Mammary epithelial cell (primary cell): ENCODE measurements at regions of chr18 and their contacts with region 1.

Region 1: GRCh38 chr18:48436907-48437306 is 27.7 kb upstream of the ZBTB7C start:
- DNase-seq: peak; percentile 76
- H3K4me3 ChIP-seq: no peak overlapping the region
- H3K27ac ChIP-seq: no peak overlapping the region
- H3K4me1 ChIP-seq: peaks cover 19% of the 10 kb centered on the region
- H3K27me3 ChIP-seq: no peaks in the 10 kb centered on the region
- CTCF ChIP-seq: no peak

Region 2: DNA sequence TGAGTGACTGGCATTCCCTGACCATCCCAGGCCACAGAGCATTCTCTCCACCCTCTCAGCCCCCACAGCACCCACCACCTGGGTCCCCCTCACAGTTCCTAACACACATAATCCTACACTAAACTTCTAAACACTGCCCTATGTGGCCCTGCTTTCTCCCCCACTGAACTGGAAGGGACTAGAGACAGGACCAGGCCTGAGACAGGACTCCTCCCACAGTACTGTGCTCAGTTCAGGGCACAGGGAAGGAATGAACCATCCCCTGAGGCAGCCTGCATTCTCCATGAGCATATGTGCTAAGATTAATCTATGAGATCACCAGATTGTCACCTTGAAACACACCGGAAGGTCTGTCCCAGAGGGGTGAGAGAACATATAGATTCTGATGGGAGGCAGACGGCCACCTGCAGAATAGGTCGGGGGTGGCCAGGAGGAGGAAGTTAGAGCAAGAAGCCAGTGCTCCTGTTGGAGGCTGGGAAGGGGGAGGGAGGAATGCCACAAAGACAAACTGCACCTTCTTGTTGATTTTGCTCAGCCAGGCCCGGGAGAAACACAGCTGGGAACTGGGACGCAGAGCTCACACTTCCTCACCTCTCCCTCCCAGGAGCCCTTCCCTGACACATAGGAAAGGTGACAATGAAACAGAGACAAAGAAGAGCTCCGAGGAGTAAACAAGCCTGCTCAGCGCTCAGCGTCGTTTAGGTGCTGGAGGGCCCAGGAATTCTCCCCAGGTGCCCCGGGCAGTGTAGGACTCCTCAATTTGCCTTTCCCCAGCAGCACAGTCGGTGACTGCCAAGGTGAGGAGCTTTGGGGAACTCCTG is 79.9 kb before region 1 on chr18:
- CTCF ChIA-PET with region 1: no interaction called
- dilution Hi-C with region 1: loop called (anchors 5 kb)
- in situ Hi-C with region 1: no loop called
- intact Hi-C with region 1: no loop called
- DNase-seq: no peak
- H3K4me3 ChIP-seq: no peak overlapping the region
- H3K27ac ChIP-seq: no peak overlapping the region
- H3K4me1 ChIP-seq: peaks cover 34% of the 10 kb centered on the region
- H3K27me3 ChIP-seq: no peaks in the 10 kb centered on the region
- CTCF ChIP-seq: no peak

Region 3: DNA sequence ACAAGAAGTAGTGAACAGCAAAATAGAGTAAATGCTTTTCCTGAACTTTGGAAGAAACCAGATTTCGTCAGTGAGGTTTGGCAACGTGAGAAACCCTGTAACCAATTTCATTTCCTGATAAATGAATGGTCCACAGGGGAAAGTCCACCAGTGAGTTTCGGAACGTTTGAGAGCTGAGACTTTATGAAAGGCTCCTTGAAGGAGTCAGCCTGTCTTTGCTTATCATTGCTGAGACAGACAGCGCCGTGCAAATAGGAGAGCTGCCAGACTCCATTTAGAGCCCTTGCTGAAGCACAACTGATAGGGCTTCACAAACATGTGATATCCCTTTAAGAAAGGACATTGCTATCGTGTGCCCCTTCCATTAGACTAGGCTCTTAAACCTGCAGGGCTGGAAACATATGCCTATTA is 635.6 kb after region 1 on chr18:
- CTCF ChIA-PET with region 1: no interaction called
- dilution Hi-C with region 1: no loop called
- in situ Hi-C with region 1: no loop called
- intact Hi-C with region 1: no loop called
- DNase-seq: no peak
- H3K4me3 ChIP-seq: no peak overlapping the region
- H3K27ac ChIP-seq: no peak overlapping the region
- H3K4me1 ChIP-seq: no peaks in the 10 kb centered on the region
- H3K27me3 ChIP-seq: no peaks in the 10 kb centered on the region
- CTCF ChIP-seq: no peak